A549 (cell line): ENCODE measurements at regions of chr11 and their contacts with region 1.

Region 1: DNA sequence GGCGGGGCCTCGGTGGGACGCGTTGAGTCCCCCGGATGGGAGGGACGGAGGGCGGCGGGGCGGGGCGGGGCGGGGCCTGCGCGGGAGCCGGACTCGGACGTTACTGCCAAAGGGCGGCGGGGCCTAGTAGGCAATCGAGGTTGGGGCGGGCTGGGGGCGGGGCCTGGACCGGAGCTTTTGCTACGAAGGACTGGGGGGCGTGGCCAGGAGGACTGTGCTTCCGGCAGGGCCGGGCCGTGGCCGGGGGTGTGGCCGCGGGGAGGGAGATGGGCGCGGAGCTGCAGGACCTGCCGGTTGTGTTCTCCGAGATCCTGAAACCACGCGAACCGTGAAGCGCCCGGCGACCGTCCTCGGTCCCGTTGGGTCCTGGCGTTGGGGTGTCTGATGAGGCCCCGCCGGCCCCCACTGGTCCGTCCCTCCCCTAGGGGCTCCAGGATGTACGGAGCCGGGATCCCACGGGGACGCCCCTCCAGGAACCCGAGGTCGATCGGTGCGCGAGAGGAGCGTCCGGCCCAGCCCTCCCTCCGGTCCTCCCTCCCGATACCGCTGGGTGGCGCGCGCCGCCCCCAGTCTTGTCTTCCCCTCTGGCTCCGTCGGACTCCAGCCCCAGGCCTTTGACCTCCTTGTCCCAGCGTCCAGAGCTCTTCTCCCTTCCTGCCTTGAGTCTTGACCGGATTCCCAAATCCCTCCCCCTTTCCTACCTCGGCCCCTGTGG is 648 bp upstream of the NUDT8 start:
- DNase-seq: peak; percentile 91 to 98
- ATAC-seq: peak; percentile 72 to 88
- H3K4me3 ChIP-seq: peak overlapping the region; percentile 59
- H3K27ac ChIP-seq: peak overlapping the region; percentile 77 to 87
- H3K4me1 ChIP-seq: peaks cover 6% of the 10 kb centered on the region; the same call in 2 of the 3 replicates
- CTCF ChIP-seq: peak; percentile 68
- EP300 ChIP-seq: no peak
- POLR2A ChIP-seq: peak; percentile 52
- RAD21 ChIP-seq: peak; percentile 49 to 57

Region 2: DNA sequence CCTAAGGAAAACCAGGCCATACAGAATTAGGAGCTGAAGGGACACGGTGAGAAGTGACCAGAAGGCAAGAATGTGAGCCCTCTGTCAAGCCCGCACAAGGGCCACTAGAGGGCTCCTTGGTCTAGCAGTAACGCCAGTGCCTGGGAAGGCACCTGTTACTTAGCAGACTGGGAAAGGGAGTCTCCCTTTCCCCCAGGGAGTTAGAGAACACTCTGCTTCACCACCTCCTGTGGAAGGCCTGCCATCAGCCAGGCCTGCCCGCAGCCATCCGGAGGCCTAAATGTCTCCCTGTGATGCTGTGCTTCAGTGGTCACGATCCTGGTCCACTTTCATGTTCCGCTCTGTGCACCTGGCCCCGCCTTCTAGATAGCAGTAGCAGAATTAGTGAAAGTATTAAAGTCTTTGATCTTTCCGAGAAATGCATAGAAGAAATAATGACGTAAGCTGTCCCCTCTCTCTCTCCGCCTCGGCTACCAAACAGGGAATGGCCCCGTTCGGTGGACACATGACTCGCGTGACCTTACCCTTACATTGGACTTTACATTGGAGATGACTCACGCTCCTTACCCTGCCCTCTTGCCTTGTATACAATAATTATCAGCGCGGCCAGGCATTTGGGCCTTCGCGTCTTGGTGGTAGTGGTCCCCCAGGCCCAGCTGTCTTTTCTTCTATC is 57.5 kb before region 1 on chr11:
- CTCF ChIA-PET with region 1: interaction called, 16 read pairs
- POLR2A ChIA-PET with region 1: no interaction called
- DNase-seq: peak in 1 of 2 experiments; percentile 81
- ATAC-seq: peak; percentile 52 to 80; a peak in 4 of 6 replicates
- H3K4me3 ChIP-seq: 0 out of 3 replicates have a peak overlapping the region, but pooled peaks have one; percentile 24
- H3K27ac ChIP-seq: peak overlapping the region; percentile 31 to 72; a peak in 4 of 6 replicates
- H3K4me1 ChIP-seq: peaks cover 13% of the 10 kb centered on the region
- CTCF ChIP-seq: peak; percentile 88
- EP300 ChIP-seq: no peak
- POLR2A ChIP-seq: no peak
- RAD21 ChIP-seq: peak; percentile 80 to 85

Region 3: DNA sequence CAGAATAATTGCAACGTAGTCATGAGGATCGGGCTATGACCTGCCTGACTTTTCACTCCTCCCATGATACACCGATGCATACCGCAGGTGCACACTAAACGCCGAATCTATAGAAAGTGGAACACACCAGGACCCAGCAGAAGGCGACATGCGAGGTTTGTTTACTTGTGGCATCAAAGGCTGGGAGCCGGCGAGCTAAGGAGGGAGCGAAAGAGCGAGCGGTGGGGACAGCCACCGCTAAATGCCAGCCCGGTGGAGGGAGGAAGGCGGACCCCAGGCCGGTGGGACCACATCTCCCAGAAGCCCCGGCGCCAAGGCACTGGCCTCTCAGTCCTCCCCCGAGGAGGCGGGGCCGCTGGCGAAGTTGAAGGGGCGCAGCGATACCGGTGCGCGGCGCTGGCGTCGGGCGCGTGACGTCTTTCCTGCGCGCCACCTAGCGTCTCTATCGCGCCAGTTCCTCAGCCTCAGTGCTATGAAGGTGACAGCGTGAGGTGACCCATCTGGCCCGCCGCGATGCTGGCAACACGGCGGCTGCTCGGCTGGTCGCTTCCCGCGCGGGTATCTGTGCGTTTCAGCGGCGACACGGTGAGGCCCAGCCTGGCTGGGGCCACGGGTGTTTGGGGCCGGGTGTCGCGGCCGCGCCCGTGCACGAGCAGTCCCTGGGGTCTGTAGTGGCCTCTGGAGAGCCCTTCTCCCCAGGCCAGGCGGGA is 23.7 kb before region 1 on chr11 and contains the start of gene NDUFV1:
- CTCF ChIA-PET with region 1: interaction called, 181 read pairs
- POLR2A ChIA-PET with region 1: interaction called, 3 read pairs
- DNase-seq: peak; percentile 69 to 92
- ATAC-seq: peak; percentile 95 to 99
- H3K4me3 ChIP-seq: peak within 1 kb of the TSS; percentile 82
- H3K27ac ChIP-seq: peak within 1 kb of the TSS; percentile 76 to 91
- H3K4me1 ChIP-seq: peaks cover 19% of the 10 kb centered on the region
- CTCF ChIP-seq: peak; percentile 36; the same call in 2 of the 3 replicates
- EP300 ChIP-seq: no peak
- POLR2A ChIP-seq: peak; percentile 73
- RAD21 ChIP-seq: peak in 1 of 2 experiments; percentile 39; a peak in 2 of 5 replicates
- polyA plus RNA-seq, gene NDUFV1: 78.8 and 95.1 TPM in 2 replicates

Region 4: GRCh38 chr11:67613960-67614715 is 16.2 kb before region 1 on chr11:
- CTCF ChIA-PET with region 1: interaction called, 181 read pairs
- POLR2A ChIA-PET with region 1: interaction called, 9 read pairs
- DNase-seq: peak in 1 of 2 experiments; percentile 46
- ATAC-seq: peak; percentile 55 to 82; a peak in 5 of 6 replicates
- H3K4me3 ChIP-seq: no peak overlapping the region
- H3K27ac ChIP-seq: no peak overlapping the region; a peak in 1 of 6 replicates
- H3K4me1 ChIP-seq: no peaks in the 10 kb centered on the region
- CTCF ChIP-seq: peak; percentile 54
- EP300 ChIP-seq: no peak
- POLR2A ChIP-seq: no peak
- RAD21 ChIP-seq: 0 out of 5 replicates have a peak, but pooled peaks of 1 of the 2 experiments have one; percentile 27

Region 5: GRCh38 chr11:67648140-67649123 is 18.0 kb after region 1 on chr11:
- CTCF ChIA-PET with region 1: interaction called, 169 read pairs
- POLR2A ChIA-PET with region 1: interaction called, 10 read pairs
- DNase-seq: peak; percentile 47 to 59
- ATAC-seq: peak; percentile 92 to 94
- H3K4me3 ChIP-seq: no peak overlapping the region
- H3K27ac ChIP-seq: no peak overlapping the region
- H3K4me1 ChIP-seq: peaks cover 5% of the 10 kb centered on the region; the same call in 2 of the 3 replicates
- CTCF ChIP-seq: peak; percentile 32; the same call in 1 of the 3 replicates
- EP300 ChIP-seq: no peak
- POLR2A ChIP-seq: no peak
- RAD21 ChIP-seq: peak in 1 of 2 experiments; percentile 19; a peak in 2 of 5 replicates

Region 6: DNA sequence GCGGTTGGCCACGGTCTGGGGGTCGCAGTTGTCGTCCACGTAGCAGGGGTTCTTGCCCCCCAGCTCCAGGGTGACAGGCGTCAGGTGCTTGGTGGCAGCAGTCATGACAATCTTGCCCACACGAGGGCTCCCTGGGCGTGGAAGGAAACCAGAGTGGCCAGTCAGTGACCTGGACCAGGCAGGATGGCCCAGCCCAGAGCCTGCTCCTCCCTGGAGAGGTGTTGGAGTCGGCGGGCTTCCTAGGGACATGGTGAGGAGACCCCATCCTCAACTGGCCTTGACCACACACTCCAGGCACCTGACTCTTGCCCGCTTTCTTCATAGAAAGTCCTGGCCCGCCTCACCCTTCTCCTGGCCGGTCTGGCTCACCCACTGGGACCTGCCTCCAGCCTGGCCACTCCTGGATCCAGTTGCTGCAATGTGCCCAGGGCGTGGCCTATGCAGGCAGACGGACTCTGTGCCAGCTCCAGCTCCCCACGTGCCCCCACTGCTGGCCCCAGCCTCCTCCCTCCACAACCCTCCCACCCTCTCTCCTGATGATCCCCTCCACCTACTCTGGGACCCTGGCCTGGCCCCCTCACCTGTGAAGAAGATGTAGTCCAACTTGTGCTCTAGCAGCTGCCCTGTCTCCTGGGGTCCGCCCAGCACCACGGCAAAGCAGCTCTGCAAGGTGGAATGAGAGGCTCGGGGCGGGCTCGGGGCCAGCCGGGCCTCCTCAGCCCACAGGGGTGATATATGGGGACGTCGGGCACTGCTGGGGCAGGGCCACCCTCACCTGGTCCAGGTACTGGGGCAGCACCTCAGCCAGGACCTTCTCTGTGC is 35.4 kb after region 1 on chr11:
- CTCF ChIA-PET with region 1: interaction called, 150 read pairs
- POLR2A ChIA-PET with region 1: no interaction called
- DNase-seq: peak in 1 of 2 experiments; percentile 46
- ATAC-seq: peak; percentile 67 to 82
- H3K4me3 ChIP-seq: no peak overlapping the region
- H3K27ac ChIP-seq: no peak overlapping the region
- H3K4me1 ChIP-seq: no peaks in the 10 kb centered on the region
- CTCF ChIP-seq: peak; percentile 34; the same call in 1 of the 3 replicates
- EP300 ChIP-seq: no peak
- POLR2A ChIP-seq: no peak
- RAD21 ChIP-seq: peak; percentile 37 to 51; a peak in 4 of 5 replicates

Region 7: DNA sequence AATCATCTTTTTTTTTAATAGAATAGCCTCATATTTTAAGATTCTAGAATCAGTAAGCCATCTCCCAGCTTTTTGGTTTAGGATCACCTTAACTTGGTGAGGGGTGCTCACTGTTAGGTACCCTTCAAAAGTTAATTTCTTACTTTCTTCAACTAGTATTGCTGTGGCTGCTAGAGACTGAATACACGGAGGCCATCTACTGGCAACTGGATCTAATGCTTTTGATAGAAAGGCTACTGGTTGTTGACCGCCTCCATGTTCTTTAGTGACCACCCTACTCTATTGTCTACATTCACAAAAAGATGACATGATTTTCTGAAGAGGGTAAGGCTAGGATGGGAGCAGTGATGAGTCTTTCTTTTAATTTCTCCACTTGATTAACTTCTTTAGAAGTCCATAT is 60.8 kb after region 1 on chr11:
- CTCF ChIA-PET with region 1: interaction called, 24 read pairs
- POLR2A ChIA-PET with region 1: interaction called, 4 read pairs
- DNase-seq: no peak
- ATAC-seq: peak; percentile 64 to 72; a peak in 5 of 6 replicates
- H3K4me3 ChIP-seq: no peak overlapping the region
- H3K27ac ChIP-seq: no peak overlapping the region
- H3K4me1 ChIP-seq: no peaks in the 10 kb centered on the region
- CTCF ChIP-seq: peak; percentile 44
- EP300 ChIP-seq: no peak
- POLR2A ChIP-seq: no peak
- RAD21 ChIP-seq: peak; percentile 31 to 44; a peak in 3 of 5 replicates